ENCODE measurements at regions of chr10 and their contacts with region 1.

Region 1: GRCh38 chr10:73413528-73414229 is at the start of gene ANXA7:
- DNase-seq: peak; percentile 98
- total RNA-seq, gene ANXA7: 132 TPM

Region 2: DNA sequence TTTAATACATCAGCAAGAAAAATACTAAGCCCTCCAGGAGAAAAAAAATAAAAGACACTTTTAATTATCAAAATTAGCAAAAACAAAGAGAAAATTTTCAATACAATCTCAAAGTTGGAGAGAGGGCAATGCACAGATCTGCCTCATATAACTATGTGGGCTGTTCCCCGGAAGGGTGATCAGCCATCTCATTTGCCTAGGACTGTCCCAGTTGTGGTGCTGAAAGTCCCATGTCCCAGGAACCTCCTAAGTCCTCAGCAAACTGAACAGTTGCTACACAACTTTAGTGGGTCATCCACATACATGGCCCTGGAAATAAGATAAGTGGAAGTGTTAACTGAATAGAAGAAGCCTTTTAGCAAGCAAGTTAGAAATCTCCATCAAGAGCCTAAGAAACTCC is 69.4 kb before region 1 on chr10:
- intact Hi-C with region 1: no loop called
- DNase-seq: no peak

Region 3: DNA sequence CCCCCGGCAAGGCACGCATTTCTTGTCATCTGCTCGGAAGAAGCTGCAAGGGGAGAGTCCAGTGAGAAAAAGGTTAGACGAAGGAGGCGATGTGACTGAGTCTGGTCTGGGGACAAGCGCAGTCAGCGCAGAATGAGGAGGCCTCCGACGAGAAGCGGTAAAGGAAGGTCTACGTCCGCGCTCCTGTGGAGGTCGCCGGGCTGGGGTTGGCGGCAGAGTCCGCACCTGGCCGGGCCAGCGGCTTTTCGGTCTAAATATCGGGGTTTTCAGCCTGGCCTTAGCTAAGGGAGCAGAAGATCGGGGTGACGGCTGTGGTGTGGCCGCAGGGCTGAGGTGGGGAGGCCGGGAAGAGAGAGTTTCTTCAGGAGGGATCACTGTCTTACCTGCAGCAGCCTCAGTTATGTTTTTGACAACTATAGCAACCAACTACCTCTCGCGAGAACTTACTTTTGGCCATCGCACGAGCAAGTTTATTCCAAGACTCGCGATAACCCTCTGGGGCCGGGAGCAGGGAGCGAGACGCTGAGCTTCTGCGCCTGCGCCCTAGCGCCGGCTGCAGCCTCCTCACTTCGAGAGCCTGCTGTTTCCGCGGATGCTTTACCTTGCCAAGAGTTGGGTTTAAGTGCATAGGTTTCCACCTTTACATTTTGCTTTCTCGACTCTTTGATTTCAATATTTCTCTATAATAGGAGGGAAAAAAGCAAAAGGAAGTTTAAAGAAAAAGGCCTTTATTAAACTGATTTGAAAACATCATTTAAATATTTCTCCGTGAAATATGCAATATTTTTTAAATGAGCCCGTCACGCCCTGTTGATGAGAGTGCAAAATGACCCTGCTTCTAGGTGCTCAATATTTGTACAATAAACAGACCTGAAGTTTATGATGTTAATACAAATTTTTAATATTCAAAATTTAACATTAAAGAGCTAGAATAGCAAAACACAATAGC is 55.1 kb before region 1 on chr10 and contains the start of gene CFAP70:
- intact Hi-C with region 1: loop called (anchors 5 kb)
- DNase-seq: peak; percentile 91
- total RNA-seq, gene CFAP70: 1.4 TPM

Region 4: GRCh38 chr10:73495884-73496674 is 82.4 kb after region 1 on chr10 and contains the start of gene PPP3CB:
- intact Hi-C with region 1: loop called (anchors 5 kb)
- DNase-seq: peak; percentile 94
- total RNA-seq, gene PPP3CB: 61.6 TPM

Region 5: DNA sequence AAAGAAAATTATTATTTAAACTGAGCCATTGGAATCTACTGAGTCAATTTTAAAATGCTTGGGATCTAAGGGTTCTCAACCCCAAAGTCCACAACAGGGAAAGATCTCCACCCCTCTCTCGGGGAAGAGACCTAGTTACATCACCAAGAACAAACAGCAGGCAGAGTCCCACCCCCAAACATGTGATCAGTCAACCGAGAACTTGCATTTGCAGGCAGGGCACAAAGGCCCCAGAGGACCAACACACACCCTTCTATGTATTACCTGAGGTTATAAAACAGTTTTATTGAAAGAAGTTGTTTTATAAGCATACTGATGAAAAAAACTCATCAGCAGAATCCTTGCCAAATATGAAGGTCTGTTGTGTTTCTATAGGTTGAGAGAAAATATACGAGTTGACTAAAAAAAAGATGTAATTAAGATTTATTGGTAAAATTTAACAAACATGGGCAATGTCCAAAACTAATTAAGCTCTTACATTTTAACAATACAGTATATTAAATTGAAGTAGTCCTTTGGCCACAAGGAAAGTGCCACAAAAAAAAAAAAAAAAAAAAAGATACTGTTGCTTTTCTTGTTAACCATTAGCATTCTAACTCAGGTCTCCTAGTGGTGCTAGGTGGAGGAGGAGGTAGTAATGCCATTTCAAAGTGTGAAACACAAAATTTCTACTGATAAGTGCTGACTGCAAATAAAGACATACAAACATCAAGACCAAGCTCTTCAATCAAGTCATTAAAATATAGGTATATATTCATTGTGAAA is 178.4 kb after region 1 on chr10:
- intact Hi-C with region 1: no loop called
- DNase-seq: no peak

Region 6: DNA sequence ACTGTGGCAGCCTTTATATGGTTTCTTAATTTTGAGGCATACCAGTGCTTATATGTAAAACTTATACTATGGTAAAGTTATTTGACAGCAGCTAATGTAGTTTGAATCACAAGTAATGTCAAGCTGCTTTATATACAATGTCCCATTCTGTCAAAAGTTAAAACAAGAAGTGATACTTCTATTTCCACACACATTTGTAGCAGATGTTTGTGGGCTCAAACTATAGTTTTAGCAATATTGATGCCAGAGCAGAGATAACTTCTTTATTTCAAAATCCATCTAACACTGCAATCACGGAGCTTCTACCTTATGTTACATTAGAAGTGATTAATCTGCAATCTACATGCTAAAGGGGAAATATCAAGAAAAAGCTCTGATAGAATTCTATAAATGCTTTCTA is 887.0 kb after region 1 on chr10:
- intact Hi-C with region 1: no loop called
- DNase-seq: no peak